IMR-90 (cell line): ENCODE measurements at regions of chr2 and their contacts with region 1.

Region 1: GRCh38 chr2:43622931-43623451 is 14.1 kb upstream of the PLEKHH2 start:
- DNase-seq: no peak
- ATAC-seq: peak; percentile 54
- H3K4me3 ChIP-seq: no peak overlapping the region
- H3K27ac ChIP-seq: no peak overlapping the region
- H3K4me1 ChIP-seq: no peaks in the 10 kb centered on the region
- H3K27me3 ChIP-seq: peaks cover 10% of the 10 kb centered on the region
- CTCF ChIP-seq: no peak
- POLR2A ChIP-seq: no peak
- RAD21 ChIP-seq: no peak

Region 2: DNA sequence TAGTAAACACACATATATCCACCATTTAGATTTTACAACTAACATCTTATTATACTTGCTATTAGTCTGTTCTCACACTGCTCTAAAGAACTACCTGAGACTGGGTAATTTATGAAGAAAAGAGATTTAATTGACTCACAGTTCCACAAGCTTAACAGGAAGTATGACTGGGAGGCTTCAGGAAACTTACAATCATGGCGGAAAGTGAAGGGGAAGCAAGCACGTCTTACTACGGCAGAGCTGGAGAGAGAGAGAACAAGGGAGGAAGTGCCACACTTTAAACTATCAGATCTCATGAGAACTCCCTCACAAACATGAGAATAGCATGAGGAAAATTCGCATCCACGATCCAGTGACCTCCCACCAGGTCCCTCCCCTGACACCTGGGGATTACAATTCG is 979.5 kb after region 1 on chr2:
- CTCF ChIA-PET with region 1: no interaction called
- POLR2A ChIA-PET with region 1: no interaction called
- dilution Hi-C with region 1: no loop called
- in situ Hi-C with region 1: no loop called
- intact Hi-C with region 1: loop called (anchors 10 kb)
- DNase-seq: no peak
- ATAC-seq: no peak
- H3K4me3 ChIP-seq: no peak overlapping the region
- H3K27ac ChIP-seq: no peak overlapping the region
- H3K4me1 ChIP-seq: no peaks in the 10 kb centered on the region
- H3K27me3 ChIP-seq: no peaks in the 10 kb centered on the region
- CTCF ChIP-seq: no peak
- POLR2A ChIP-seq: no peak
- RAD21 ChIP-seq: no peak